CD4-positive, alpha-beta T cell (primary cell): ENCODE measurements at regions of chr4 and their contacts with region 1.

Region 1: GRCh38 chr4:153488006-153488891 is 22.1 kb downstream of the TMEM131L start:
- DNase-seq: peak in 13 of 14 experiments; percentile 50 to 94 (median 67)
- ATAC-seq: peak; percentile 65
- H3K4me3 ChIP-seq: peak overlapping the region; percentile 57
- H3K4me3 Mint-ChIP-seq: peak overlapping the region; percentile 88
- H3K27ac ChIP-seq: peak overlapping the region; percentile 92 to 94
- H3K27ac Mint-ChIP-seq: peak overlapping the region; percentile 92
- H3K4me1 ChIP-seq: peaks cover 68% of the 10 kb centered on the region
- H3K4me1 Mint-ChIP-seq: peaks cover 82% of the 10 kb centered on the region
- H3K27me3 ChIP-seq: no peaks in the 10 kb centered on the region
- H3K27me3 Mint-ChIP-seq: no peaks in the 10 kb centered on the region
- CTCF ChIP-seq: no peak

Region 2: GRCh38 chr4:152843481-152844090 is 644.7 kb before region 1 on chr4:
- CTCF ChIA-PET with region 1: no interaction called
- POLR2A ChIA-PET with region 1: no interaction called
- intact Hi-C with region 1: no loop called
- DNase-seq: no peak
- ATAC-seq: no peak
- H3K4me3 ChIP-seq: no peak overlapping the region
- H3K4me3 Mint-ChIP-seq: no peak overlapping the region
- H3K27ac ChIP-seq: no peak overlapping the region
- H3K27ac Mint-ChIP-seq: no peak overlapping the region
- H3K4me1 ChIP-seq: no peaks in the 10 kb centered on the region
- H3K4me1 Mint-ChIP-seq: peaks cover 26% of the 10 kb centered on the region
- H3K27me3 ChIP-seq: no peaks in the 10 kb centered on the region
- H3K27me3 Mint-ChIP-seq: no peaks in the 10 kb centered on the region
- CTCF ChIP-seq: no peak

Region 3: DNA sequence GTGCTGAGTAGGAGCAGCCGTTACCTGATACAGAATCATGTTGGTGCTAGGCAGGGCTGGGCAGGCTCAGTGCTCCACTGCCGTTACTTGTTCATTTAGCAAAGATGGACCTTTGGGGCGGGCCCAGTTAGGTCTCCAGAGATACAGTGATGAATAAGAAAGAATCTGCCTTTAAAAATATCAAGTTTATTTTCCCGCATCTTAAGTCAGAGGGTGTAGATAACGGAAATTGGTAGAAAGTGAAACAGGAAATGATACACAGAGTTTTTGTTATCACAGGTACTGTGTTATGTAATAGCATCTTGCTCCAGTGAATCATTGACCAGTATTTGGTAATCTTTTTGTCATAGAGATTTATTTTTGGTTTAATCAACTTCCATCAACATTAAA is 16.6 kb before region 1 on chr4:
- CTCF ChIA-PET with region 1: interaction called, 6 read pairs
- POLR2A ChIA-PET with region 1: interaction called, 434 read pairs
- intact Hi-C with region 1: loop called in 1 of 2 experiments (anchors 1 kb)
- DNase-seq: peak in 10 of 14 experiments; percentile 33 to 86 (median 52)
- ATAC-seq: peak; percentile 62
- H3K4me3 ChIP-seq: peak overlapping the region; percentile 98
- H3K4me3 Mint-ChIP-seq: peak overlapping the region; percentile 98
- H3K27ac ChIP-seq: peak overlapping the region; percentile 87 to 89
- H3K27ac Mint-ChIP-seq: peak overlapping the region; percentile 95
- H3K4me1 ChIP-seq: peaks cover 52% of the 10 kb centered on the region
- H3K4me1 Mint-ChIP-seq: peaks cover 84% of the 10 kb centered on the region
- H3K27me3 ChIP-seq: no peaks in the 10 kb centered on the region
- H3K27me3 Mint-ChIP-seq: no peaks in the 10 kb centered on the region
- CTCF ChIP-seq: no peak

Region 4: DNA sequence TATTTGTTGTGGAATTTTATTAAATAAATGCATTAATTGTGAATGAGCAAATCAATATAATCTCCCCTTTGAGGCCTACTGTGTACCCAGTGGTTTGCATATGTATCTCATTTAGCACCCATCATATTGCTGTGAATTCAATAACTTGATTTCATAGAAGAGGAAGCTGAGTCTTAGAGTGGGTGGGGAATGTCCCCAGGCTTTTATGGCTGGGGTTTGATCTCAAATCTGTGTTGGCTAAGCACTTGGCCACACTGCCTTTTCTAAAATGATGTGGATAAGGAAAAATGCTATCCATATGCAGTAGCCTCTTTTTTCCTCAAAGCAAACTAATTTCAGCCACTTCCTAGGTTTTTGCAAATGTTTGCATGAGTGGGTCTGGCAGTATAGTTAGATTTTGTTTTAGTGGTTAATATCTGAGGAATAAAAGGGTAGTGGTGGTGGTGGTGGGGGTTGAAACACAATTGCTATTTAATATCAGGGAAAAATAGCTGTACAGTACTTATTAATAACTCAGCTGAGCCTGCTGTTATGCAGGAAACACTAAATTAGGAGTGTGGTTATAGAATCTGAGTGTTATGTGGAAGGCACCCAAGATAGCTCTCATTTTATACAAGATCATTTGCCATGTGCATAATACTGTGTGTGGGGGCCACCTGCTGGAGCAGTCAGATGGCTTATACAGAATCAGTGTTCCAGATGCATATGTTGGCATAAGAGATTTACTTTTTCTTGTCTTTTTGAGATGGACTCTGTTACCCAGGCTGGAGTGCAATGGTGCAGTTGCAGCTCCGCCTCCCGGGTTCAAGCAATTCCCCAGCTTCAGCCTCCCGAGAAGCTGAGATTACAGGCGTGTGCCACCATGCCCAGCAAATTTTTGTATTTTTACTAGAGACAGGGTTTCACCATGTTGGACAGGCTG is 85.9 kb after region 1 on chr4:
- CTCF ChIA-PET with region 1: interaction called, 6 read pairs
- POLR2A ChIA-PET with region 1: interaction called, 7 read pairs
- intact Hi-C with region 1: loop called in 1 of 2 experiments (anchors 5 kb)
- DNase-seq: peak; percentile 47 to 83 (median 65)
- ATAC-seq: peak; percentile 97
- H3K4me3 ChIP-seq: no peak overlapping the region
- H3K4me3 Mint-ChIP-seq: peak overlapping the region; percentile 25
- H3K27ac ChIP-seq: peak overlapping the region; percentile 1 to 32
- H3K27ac Mint-ChIP-seq: peak overlapping the region; percentile 57
- H3K4me1 ChIP-seq: peaks cover 37% of the 10 kb centered on the region
- H3K4me1 Mint-ChIP-seq: peaks cover 85% of the 10 kb centered on the region
- H3K27me3 ChIP-seq: no peaks in the 10 kb centered on the region
- H3K27me3 Mint-ChIP-seq: no peaks in the 10 kb centered on the region
- CTCF ChIP-seq: peak; percentile 78

Region 5: DNA sequence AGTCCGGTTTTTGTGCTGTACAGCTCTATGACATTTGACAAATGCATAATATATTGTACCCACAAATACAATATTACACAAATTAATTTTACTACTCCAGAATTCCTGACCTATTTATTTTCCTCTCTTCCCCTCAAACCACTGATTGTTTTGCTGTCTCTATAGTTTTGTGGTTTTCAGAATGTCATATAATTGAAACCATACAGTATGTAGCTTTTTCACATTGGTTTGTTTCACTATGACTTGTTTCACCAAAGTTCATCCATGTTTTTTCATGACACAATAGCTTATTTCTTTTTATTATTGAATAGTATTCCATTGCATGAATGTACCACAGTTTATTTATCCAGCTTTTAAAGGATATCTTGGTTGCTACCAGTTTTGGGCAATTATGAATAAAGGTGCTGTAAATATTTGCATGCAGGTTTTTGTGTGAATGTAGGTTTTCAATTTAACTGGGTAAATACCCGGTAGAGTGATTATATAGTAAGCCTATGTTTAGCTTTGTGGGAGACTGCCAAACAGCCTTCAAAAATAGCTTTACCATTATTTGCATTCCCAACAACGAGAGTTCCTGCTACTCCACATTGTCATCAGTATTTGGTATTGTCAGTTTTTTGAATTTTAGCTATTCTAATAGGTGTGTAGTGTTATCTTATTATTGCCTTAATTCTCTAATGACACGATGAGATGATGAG is 245.7 kb after region 1 on chr4:
- CTCF ChIA-PET with region 1: no interaction called
- POLR2A ChIA-PET with region 1: no interaction called
- intact Hi-C with region 1: no loop called
- DNase-seq: no peak
- ATAC-seq: no peak
- H3K4me3 ChIP-seq: no peak overlapping the region
- H3K4me3 Mint-ChIP-seq: no peak overlapping the region
- H3K27ac ChIP-seq: no peak overlapping the region
- H3K27ac Mint-ChIP-seq: no peak overlapping the region
- H3K4me1 ChIP-seq: no peaks in the 10 kb centered on the region
- H3K4me1 Mint-ChIP-seq: no peaks in the 10 kb centered on the region
- H3K27me3 ChIP-seq: no peaks in the 10 kb centered on the region
- H3K27me3 Mint-ChIP-seq: no peaks in the 10 kb centered on the region
- CTCF ChIP-seq: no peak